ENCODE measurements at regions of chr10 and their contacts with region 1.

Region 1: DNA sequence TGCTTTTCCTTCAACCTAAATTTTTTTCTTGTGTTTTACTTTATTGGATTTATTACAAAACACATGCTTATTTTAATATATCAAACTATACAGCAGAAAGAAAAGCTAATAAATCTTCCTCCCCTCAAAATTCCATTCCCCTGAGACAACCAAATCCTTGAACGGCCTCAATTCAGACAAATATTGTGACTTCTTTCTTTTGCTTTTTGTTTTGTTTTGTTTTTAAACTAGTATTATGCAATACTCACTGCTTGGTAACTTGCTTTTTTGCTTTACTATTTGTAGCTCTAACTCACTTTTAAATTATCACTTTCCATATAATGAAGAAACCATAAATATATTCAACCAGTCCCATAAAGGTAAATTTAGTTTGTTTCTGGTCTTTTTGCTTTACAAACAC is 59.4 kb upstream of the CDK1 start:
- DNase-seq: peak; percentile 82
- ATAC-seq: peak; percentile 31
- H3K4me3 ChIP-seq: peak overlapping the region; percentile 12; the same call in 1 of the 2 replicates
- H3K27ac ChIP-seq: no peak overlapping the region
- H3K4me1 ChIP-seq: peaks cover 27% of the 10 kb centered on the region
- H3K27me3 ChIP-seq: no peaks in the 10 kb centered on the region
- CTCF ChIP-seq: no peak

Region 2: GRCh38 chr10:60733189-60733822 is 14.4 kb after region 1 on chr10:
- CTCF ChIA-PET with region 1: interaction called, 8 read pairs
- POLR2A ChIA-PET with region 1: no interaction called
- intact Hi-C with region 1: loop called (anchors 1 kb)
- DNase-seq: peak; percentile 96
- ATAC-seq: peak; percentile 89
- H3K4me3 ChIP-seq: peak overlapping the region; percentile 75
- H3K27ac ChIP-seq: 0 out of 2 replicates have a peak overlapping the region, but pooled peaks have one; percentile 2
- H3K4me1 ChIP-seq: peaks cover 53% of the 10 kb centered on the region
- H3K27me3 ChIP-seq: no peaks in the 10 kb centered on the region
- CTCF ChIP-seq: peak; percentile 61; the same call in 1 of the 2 replicates

Region 3: GRCh38 chr10:61024856-61025600 is 306.1 kb after region 1 on chr10:
- CTCF ChIA-PET with region 1: no interaction called
- POLR2A ChIA-PET with region 1: no interaction called
- intact Hi-C with region 1: no loop called
- DNase-seq: peak; percentile 65
- ATAC-seq: peak; percentile 59
- H3K4me3 ChIP-seq: no peak overlapping the region
- H3K27ac ChIP-seq: no peak overlapping the region
- H3K4me1 ChIP-seq: peaks cover 13% of the 10 kb centered on the region
- H3K27me3 ChIP-seq: peaks cover 14% of the 10 kb centered on the region
- CTCF ChIP-seq: peak; percentile 99

Measured in PC-3 (cell line).